ENCODE measurements at regions of chr6 and their contacts with region 1.

Region 1: DNA sequence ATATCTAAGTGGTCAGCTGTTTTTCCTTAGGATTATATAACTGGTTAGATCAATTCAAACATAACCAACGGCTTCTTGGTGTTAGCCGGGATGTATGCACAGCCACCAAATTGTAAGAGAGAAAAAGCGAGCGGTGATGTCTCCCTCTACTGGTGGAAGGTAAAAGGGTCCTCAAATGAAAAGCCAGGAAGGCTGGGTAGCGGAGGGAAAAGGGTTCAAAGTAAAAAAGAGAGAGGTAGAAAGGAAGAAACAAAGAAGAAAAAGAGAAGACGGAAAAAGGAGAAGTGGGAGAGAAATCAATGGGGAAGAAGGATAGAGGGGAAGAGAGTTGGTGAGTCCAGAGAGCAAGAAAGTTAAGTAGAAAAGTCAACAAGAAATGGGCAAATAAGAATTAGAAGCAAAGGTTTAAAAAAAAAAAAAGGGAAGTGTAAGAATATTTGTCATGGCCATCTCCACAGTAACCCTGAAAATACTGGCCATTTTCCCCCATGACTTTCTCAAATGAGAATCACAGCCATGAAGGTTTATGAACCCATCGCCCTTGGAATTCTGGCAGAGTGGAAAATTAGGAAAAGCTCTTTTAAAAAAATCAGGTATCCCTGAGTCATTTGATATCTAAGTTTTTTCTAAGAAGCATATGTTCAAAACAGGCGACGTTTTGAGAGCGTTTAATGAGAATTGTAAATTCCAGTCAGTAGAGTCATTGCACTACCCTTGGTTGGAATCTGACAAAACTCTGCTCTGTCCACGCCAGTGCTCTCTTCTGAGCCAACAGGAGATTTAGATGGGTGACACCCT is 155.6 kb upstream of the SNX9 start:
- DNase-seq: no peak
- H3K4me3 ChIP-seq: no peak overlapping the region
- H3K27ac ChIP-seq: no peak overlapping the region
- H3K4me1 ChIP-seq: peaks cover 14 to 37% (median 27%) of the 10 kb centered on the region in 4 donors
- H3K27me3 ChIP-seq: no peaks in the 10 kb centered on the region
- CTCF ChIP-seq: peak; percentile 76 to 87 (median 79)
- EP300 ChIP-seq: no peak
- POLR2A ChIP-seq: no peak

Region 2: GRCh38 chr6:157379656-157380454 is 287.6 kb before region 1 on chr6:
- intact Hi-C with region 1: loop called (anchors 10 kb)
- DNase-seq: peak; percentile 98
- H3K4me3 ChIP-seq: peak overlapping the region; percentile 96 to 100 (median 98)
- H3K27ac ChIP-seq: peak overlapping the region; percentile 94 to 97 (median 96)
- H3K4me1 ChIP-seq: peaks cover 15 to 24% (median 20%) of the 10 kb centered on the region in 4 donors
- H3K27me3 ChIP-seq: no peaks in the 10 kb centered on the region
- CTCF ChIP-seq: no peak
- EP300 ChIP-seq: no peak
- POLR2A ChIP-seq: no peak

Measured in esophagus muscularis mucosa (tissue), 4 donors.